Ovary (tissue), 10 donors: ENCODE measurements at regions of chr18 and their contacts with region 1.

Region 1: DNA sequence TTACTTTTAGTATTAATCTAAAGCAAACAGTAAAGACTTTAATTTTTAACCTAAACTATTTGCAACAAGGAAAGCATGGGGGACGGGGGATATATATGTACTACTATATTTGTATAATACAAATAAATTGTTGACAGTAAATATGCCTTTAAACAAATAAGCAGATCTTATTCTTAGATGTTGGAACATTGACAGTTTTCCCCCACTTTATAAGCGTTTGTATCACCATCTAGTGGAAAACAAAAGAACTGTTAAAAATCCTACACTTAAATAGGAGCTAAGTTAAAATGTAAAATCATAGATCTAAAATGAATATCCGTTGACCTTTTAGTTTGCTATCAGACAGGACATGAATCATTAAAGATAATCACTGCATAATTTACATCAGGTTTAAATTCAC is 50.0 kb downstream of the RBBP8 start:
- DNase-seq: no peak
- H3K4me3 ChIP-seq: no peak overlapping the region
- H3K27ac ChIP-seq: no peak overlapping the region
- H3K4me1 ChIP-seq: no peaks in the 10 kb centered on the region
- H3K27me3 ChIP-seq: no peaks in the 10 kb centered on the region
- CTCF ChIP-seq: peak in 1 of 3 donors; percentile 26
- EP300 ChIP-seq: no peak
- POLR2A ChIP-seq: no peak

Region 2: DNA sequence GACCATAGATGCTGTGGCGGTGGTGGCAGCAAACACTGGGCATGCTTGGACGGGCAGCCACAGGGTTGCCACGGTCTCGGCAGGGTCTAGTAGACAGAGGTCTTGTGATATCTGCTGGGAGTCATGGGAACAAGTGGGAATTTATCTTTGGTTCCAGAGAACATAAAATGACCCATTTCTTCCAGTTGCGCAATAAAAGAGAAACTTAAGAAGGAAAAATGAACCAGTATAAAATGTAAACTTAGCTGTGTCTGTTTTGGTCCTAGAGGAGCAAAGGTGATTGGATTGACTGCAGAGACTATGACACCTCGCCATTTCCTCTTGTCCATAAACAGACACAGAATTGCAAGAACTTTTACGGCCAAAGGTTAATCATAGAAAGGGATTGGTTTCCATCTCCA is 182.6 kb before region 1 on chr18:
- intact Hi-C with region 1: loop called in 2 of 4 experiments (anchors 5 to 10 kb)
- DNase-seq: no peak
- H3K4me3 ChIP-seq: no peak overlapping the region
- H3K27ac ChIP-seq: no peak overlapping the region
- H3K4me1 ChIP-seq: peaks cover 2% of the 10 kb centered on the region
- H3K27me3 ChIP-seq: no peaks in the 10 kb centered on the region
- CTCF ChIP-seq: no peak
- EP300 ChIP-seq: peak; percentile 19
- POLR2A ChIP-seq: no peak

Region 3: DNA sequence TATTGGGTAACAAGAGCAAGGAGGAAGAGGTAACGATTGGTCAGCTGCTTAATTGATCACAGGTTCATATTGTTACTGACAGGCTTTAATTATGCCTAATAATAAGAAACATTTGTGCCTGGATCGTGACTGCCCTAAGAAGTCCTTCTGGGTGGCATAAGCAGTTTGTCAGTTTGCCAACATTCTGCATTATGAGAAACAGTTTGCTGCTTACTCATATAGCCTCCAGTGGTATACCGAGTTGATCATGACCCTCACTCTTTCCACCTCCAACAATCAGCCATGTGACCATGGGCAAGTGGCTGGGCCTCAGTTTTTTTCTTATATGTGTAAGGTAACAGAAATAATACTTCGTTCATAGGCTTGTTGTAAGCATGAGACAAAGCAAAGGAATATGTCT is 55.5 kb after region 1 on chr18:
- intact Hi-C with region 1: loop called in 1 of 4 experiments (anchors 5 kb)
- DNase-seq: no peak
- H3K4me3 ChIP-seq: no peak overlapping the region
- H3K27ac ChIP-seq: no peak overlapping the region
- H3K4me1 ChIP-seq: no peaks in the 10 kb centered on the region
- H3K27me3 ChIP-seq: no peaks in the 10 kb centered on the region
- CTCF ChIP-seq: no peak
- EP300 ChIP-seq: no peak
- POLR2A ChIP-seq: no peak